HepG2 (cell line): ENCODE measurements at regions of chr3 and their contacts with region 1.

Region 1: GRCh38 chr3:161343986-161344385 is 27.3 kb downstream of the SPTSSB start:
- DNase-seq: no peak
- ATAC-seq: no peak
- H3K4me3 ChIP-seq: no peak overlapping the region
- H3K27ac ChIP-seq: peak overlapping the region; percentile 5
- H3K4me1 ChIP-seq: peaks cover 57% of the 10 kb centered on the region
- H3K27me3 ChIP-seq: no peaks in the 10 kb centered on the region
- CTCF ChIP-seq: no peak
- EP300 ChIP-seq: no peak
- POLR2A ChIP-seq: no peak
- RAD21 ChIP-seq: no peak

Region 2: DNA sequence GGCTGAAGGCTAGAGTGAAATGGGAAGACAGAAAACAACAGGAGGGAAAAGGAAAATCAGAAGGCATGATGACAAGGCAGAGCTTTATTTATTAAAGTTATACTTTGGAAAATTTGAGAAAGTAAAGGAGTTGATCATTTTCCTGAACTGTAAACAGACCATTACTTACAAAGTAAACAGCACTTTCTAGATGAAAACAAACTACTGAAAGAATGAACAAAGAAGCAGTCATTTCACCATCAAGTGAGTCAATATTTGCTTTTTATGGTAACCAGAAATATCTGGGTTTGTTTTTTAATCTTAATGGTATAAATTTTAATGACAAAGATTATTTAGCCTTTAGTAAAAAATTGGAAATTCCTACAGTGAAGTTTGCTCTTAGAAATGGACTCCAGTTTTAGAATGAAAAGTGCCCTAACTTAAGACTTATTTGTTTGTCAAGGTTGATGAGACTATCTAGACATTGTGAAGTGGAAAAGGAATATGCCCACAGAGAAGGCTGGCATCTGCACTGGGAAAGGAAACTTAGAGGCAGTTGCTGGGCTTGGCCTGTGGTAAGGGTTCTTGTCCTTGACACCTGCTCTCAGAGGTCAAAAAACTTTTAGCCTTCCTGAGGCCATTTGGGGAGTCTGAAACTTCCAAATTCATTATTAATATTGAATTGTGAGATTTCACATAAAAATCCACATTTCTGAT is 19.9 kb before region 1 on chr3:
- CTCF ChIA-PET with region 1: no interaction called
- POLR2A ChIA-PET with region 1: interaction called, 9 read pairs
- in situ Hi-C with region 1: no loop called
- intact Hi-C with region 1: loop called (anchors 2 kb)
- DNase-seq: peak; percentile 86
- ATAC-seq: peak; percentile 74
- H3K4me3 ChIP-seq: peak overlapping the region in 2 of 3 experiments; percentile 44 to 46; a peak in 2 of 6 replicates
- H3K27ac ChIP-seq: peak overlapping the region; percentile 83
- H3K4me1 ChIP-seq: peaks cover 47% of the 10 kb centered on the region
- H3K27me3 ChIP-seq: no peaks in the 10 kb centered on the region
- CTCF ChIP-seq: no peak
- EP300 ChIP-seq: peak; percentile 53 to 98; a peak in 2 of 4 replicates
- POLR2A ChIP-seq: no peak
- RAD21 ChIP-seq: no peak